Calu3 (cell line): ENCODE measurements at regions of chr19 and their contacts with region 1.

Region 1: GRCh38 chr19:17385878-17386611 is 8.0 kb downstream of the CCDC194 start:
- DNase-seq: peak; percentile 61
- H3K4me3 Mint-ChIP-seq: no peak overlapping the region
- H3K27ac Mint-ChIP-seq: no peak overlapping the region
- H3K4me1 Mint-ChIP-seq: no peaks in the 10 kb centered on the region
- H3K27me3 Mint-ChIP-seq: peaks cover 12% of the 10 kb centered on the region
- CTCF ChIP-seq: peak; percentile 80

Region 2: DNA sequence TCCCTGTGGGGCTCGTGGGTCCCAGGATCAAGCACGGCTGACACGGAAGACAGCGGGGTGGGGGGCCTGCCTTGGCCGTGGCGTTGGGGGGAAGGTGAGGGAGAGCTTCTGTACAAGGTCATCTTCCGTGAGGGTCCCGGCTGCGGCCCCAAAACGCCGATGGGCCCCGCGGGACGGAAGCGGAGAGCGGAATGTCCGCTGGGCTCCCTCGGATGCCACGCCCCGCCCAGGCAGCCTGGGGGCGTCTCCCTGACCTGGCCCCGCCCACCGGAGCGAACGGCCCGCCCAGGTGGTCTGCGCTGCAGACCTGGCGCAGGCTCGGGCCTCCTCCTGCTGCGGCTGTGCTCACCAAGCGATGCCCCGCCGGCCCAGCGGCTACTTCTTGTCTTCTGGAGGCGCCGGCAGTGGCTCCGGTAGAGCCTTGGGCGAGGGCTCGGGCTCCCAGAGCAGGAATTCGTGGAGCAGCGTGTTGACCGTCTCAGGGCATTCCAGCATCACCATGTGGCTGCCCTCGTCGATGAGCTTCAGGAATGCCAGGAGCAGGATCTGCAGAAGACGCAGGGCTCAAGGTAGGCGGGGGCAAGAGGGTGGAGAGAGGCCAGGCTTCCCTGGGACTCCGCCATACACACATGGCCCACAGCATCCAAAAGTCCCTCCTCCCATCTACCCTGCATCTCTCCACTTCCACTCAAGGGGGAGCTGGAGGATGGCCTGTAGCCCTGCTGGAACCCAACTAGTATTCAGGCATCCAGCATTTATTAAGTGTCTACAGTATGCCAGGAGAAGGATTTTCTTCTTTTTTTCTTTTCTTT is 93.6 kb before region 1 on chr19:
- CTCF ChIA-PET with region 1: interaction called, 4 read pairs
- intact Hi-C with region 1: loop called (anchors 2 kb)
- DNase-seq: peak; percentile 87
- H3K4me3 Mint-ChIP-seq: peak overlapping the region; percentile 73
- H3K27ac Mint-ChIP-seq: no peak overlapping the region
- H3K4me1 Mint-ChIP-seq: no peaks in the 10 kb centered on the region
- H3K27me3 Mint-ChIP-seq: no peaks in the 10 kb centered on the region
- CTCF ChIP-seq: peak; percentile 37

Region 3: DNA sequence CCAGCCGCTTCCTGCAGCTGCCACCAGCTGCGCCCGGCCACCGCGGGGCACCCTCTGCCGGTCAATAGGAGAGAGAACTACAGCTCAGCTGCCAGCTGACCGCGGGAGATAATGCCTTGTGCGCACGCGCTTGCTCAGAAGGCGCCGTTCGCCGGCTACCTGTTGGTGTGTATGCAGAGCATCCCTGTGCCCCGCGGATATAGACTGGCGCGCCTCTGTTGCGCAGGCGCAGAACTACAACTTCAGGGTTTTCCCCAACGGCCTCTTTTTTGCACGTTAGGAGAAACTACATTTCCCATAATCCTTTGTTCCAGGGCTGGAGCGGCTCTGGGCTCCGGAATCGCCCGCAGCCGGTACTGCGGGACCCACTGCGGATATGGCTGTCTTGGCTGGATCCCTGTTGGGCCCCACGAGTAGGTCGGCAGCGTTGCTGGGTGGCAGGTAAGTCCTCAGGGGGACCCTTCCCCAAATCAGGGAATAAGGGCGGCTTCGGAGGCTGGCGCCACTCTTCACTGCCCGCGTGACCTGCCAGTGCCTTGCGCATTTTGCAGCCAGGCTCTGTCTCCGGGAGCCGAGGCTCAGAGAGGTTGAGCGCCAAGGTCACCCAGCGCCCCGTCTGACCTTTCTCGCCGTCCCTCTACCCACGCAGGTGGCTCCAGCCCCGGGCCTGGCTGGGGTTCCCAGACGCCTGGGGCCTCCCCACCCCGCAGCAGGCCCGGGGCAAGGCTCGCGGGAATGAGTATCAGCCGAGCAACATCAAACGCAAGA is 80.3 kb before region 1 on chr19 and contains the start of gene MRPL34:
- CTCF ChIA-PET with region 1: interaction called, 18 read pairs
- intact Hi-C with region 1: no loop called
- DNase-seq: peak; percentile 94
- H3K4me3 Mint-ChIP-seq: peak within 1 kb of the TSS; percentile 72
- H3K27ac Mint-ChIP-seq: no peak within 1 kb of the TSS
- H3K4me1 Mint-ChIP-seq: peaks cover 17% of the 10 kb centered on the region
- H3K27me3 Mint-ChIP-seq: no peaks in the 10 kb centered on the region
- CTCF ChIP-seq: peak; percentile 62
- total RNA-seq, gene MRPL34: 37.9 and 38.4 TPM in 2 replicates

Region 4: DNA sequence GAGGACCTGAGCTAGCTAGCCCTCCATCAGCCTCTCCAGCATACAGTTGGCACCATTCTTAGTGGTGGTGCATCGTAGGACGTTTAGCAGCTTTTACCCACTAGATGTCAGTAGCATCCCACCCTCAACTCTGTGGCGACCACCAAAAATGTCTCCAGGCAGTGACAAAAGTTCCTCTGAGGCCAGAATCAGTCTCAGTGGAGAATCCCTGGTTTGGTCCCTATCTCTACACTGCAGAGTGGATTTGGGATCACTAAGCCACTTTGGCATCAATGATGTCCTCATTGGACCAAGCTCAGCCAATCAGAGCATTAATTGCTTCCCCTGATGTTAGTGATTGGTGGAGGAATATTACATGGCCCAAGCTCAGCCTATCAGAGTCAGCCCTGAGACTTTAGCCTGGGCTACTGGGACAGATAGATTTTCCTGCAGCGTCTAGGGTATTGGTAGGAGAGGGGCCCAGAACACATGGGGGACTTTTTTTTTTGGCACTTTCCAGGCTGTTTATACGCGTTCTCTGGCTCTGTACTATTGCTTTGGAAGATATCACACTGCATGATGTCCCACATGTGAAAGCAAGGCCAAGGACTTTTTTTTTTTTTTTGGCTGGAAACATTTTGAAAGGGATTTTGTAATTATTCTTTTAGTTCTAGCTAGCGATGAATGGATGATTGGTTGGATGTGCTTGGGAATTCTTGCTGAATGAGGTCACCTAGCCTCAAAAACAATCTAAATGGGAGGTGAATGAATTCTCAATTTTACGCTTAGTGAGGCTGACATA is 55.4 kb after region 1 on chr19:
- CTCF ChIA-PET with region 1: no interaction called
- intact Hi-C with region 1: no loop called
- DNase-seq: no peak
- H3K4me3 Mint-ChIP-seq: no peak overlapping the region
- H3K27ac Mint-ChIP-seq: no peak overlapping the region
- H3K4me1 Mint-ChIP-seq: no peaks in the 10 kb centered on the region
- H3K27me3 Mint-ChIP-seq: peaks cover 17% of the 10 kb centered on the region
- CTCF ChIP-seq: no peak